Activated B cell treated with CpG ODN at 0.5 μM for 24 hours (primary cell): ENCODE measurements at regions of chr10 and their contacts with region 1.

Region 1: DNA sequence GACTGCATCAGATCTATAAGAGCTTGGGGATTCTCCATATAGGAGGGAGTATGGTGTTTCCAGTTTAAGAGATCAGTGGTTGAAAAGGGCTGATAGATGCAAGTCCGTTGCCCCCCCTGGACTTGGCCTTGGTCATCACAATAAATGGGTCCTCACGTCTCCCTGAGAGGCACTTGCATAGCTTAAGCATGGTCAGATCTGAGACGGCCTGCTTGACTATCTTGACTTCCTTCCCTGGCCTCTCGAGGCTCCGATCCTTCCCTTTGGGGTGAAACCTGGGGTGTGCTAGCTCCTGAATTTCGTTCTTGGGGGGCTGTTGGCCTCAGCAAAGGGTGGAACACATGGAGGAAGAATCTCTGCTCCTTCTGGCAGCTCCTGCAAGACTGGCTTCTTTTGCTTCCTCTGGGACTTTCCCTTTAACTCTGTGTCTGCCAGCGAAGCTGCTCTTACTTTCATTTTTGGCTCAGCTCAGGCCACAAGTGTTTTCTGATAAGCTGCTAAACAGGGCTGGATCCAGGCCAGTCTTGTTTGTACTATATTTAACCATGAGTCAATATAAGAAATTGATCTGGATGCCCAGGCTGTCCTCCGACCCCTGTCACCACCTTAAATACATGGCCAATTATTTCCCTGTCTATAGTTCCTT is 11.2 kb upstream of the ZNF485 start:
- DNase-seq: no peak
- ATAC-seq: peak; percentile 90
- H3K4me3 Mint-ChIP-seq: peak overlapping the region; percentile 85
- H3K27ac Mint-ChIP-seq: peak overlapping the region; percentile 90
- H3K4me1 Mint-ChIP-seq: peaks cover 26% of the 10 kb centered on the region
- H3K27me3 Mint-ChIP-seq: no peaks in the 10 kb centered on the region
- CTCF ChIP-seq: no peak

Region 2: DNA sequence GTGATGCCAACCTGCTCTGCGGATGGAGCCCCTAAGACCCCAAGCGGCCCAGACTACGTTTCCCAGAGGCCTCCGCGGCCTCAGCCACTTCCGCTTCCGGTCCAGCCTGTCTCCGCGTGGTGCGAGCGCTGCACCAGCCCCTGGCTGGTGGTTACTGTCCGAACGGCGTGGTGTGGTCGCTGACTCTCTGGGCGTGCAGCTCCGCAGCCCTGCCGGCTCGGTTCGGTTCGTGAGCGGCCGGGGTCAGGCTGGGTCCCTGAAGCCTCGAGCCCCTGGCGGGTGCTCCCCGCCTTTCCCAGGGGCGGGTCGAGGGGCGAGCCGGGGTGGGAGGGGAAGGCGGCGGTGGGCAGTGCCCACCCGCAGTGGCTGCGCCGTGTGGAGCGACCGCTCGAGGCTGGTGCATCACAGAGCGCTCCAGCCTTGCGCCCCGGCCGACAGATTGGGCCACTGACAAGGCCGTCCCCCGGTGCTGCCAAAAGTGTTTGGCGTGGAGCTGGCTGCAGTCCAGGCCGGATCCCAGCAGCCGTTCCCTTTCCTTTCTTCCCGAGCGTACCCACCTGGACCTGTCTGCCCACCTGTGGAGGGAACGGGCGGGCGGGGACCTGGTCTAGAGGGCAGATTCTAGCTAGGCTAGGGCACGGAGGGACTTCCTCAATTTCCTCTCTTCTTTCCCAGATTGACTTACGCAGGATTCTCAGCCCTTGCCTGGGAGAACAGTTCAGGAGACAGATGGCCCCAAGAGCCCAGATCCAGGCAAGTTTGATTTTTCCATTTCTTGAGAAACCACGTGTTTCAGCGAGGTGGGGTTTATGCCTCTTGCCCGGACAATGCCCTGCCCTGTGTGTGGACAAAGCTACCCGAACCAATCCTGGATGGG is 11.5 kb after region 1 on chr10 and contains the start of gene ZNF485:
- CTCF ChIA-PET with region 1: no interaction called
- POLR2A ChIA-PET with region 1: interaction called, 16 read pairs
- intact Hi-C with region 1: loop called (anchors 1 kb)
- DNase-seq: peak; percentile 66
- ATAC-seq: peak; percentile 95
- H3K4me3 Mint-ChIP-seq: peak within 1 kb of the TSS; percentile 84
- H3K27ac Mint-ChIP-seq: peak within 1 kb of the TSS; percentile 43
- H3K4me1 Mint-ChIP-seq: peaks cover 20% of the 10 kb centered on the region
- H3K27me3 Mint-ChIP-seq: no peaks in the 10 kb centered on the region
- CTCF ChIP-seq: no peak
- total RNA-seq, gene ZNF485: 7.6 and 9.0 TPM in 2 replicates

Region 3: GRCh38 chr10:43734716-43735115 is 139.6 kb after region 1 on chr10:
- CTCF ChIA-PET with region 1: no interaction called
- POLR2A ChIA-PET with region 1: no interaction called
- intact Hi-C with region 1: no loop called
- DNase-seq: no peak
- ATAC-seq: no peak
- H3K4me3 Mint-ChIP-seq: no peak overlapping the region
- H3K27ac Mint-ChIP-seq: no peak overlapping the region
- H3K4me1 Mint-ChIP-seq: no peaks in the 10 kb centered on the region
- H3K27me3 Mint-ChIP-seq: no peaks in the 10 kb centered on the region
- CTCF ChIP-seq: no peak